PC-9 (cell line): ENCODE measurements at regions of chr5 and their contacts with region 1.

Region 1: GRCh38 chr5:131396015-131396414 is 132.2 kb downstream of the CDC42SE2 start:
- DNase-seq: no peak
- H3K4me3 ChIP-seq: no peak overlapping the region
- H3K27ac ChIP-seq: no peak overlapping the region
- H3K4me1 ChIP-seq: no peaks in the 10 kb centered on the region
- H3K27me3 ChIP-seq: no peaks in the 10 kb centered on the region
- CTCF ChIP-seq: no peak

Region 2: GRCh38 chr5:130333089-130333488 is 1062.9 kb before region 1 on chr5:
- CTCF ChIA-PET with region 1: no interaction called
- POLR2A ChIA-PET with region 1: interaction called, 12 read pairs
- intact Hi-C with region 1: no loop called
- DNase-seq: no peak
- H3K4me3 ChIP-seq: no peak overlapping the region
- H3K27ac ChIP-seq: no peak overlapping the region
- H3K4me1 ChIP-seq: peaks cover 17% of the 10 kb centered on the region
- H3K27me3 ChIP-seq: no peaks in the 10 kb centered on the region
- CTCF ChIP-seq: no peak

Region 3: DNA sequence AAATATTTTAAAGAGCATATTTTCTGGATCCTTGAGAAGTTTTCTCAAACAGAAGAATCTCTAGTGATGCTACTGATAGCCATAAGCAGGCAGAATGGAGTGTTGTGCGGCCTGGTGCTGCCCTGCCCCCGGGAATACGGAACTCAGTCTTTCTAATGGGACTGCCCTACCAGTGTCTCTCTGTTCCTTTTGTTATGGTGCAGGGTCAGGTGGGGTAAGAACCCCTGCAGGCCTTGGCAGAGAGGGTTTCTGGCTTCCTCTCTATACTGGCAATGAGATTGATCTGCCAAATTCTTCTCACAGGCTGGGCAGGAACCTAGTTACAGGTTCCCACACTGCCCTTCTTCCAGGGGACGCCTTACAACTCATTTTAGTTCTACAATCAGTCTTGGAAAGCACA is 1144.7 kb after region 1 on chr5:
- CTCF ChIA-PET with region 1: no interaction called
- POLR2A ChIA-PET with region 1: no interaction called
- intact Hi-C with region 1: no loop called
- DNase-seq: no peak
- H3K4me3 ChIP-seq: no peak overlapping the region
- H3K27ac ChIP-seq: no peak overlapping the region
- H3K4me1 ChIP-seq: no peaks in the 10 kb centered on the region
- H3K27me3 ChIP-seq: no peaks in the 10 kb centered on the region
- CTCF ChIP-seq: no peak